Mucosa of descending colon (tissue), 3 donors: ENCODE measurements at regions of chr13 and their contacts with region 1.

Region 1: GRCh38 chr13:29849731-29850223 is 640 bp downstream of the UBL3 start:
- DNase-seq: peak; percentile 65 to 82 (median 78)
- ATAC-seq: peak; percentile 50
- H3K4me3 ChIP-seq: peak overlapping the region; percentile 90
- H3K4me1 ChIP-seq: peaks cover 16% of the 10 kb centered on the region
- CTCF ChIP-seq: no peak

Region 2: DNA sequence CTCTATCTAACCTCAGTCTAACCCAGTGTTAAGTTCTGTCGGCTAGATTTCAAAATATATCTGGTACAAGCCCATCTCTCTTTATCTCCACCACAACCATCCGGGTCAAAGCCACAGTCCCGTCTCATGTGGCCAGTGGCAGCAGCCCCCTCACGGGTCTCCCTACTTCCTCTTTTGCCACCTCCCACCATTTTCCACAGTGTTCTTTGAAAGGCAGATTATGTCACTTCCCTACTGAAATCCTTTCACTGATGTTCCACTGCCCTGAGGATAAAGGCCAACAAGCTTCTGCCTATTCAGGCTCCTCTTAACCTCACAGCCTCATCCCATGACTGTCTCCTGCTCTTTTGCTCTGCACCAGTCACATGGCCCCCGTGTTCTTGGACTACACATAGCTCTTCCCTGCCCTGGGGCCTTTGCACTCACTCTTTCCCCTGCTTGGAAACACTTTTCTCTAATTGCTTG is 116.6 kb before region 1 on chr13:
- intact Hi-C with region 1: no loop called
- DNase-seq: no peak
- ATAC-seq: peak; percentile 11
- H3K4me3 ChIP-seq: no peak overlapping the region
- H3K4me1 ChIP-seq: no peaks in the 10 kb centered on the region
- CTCF ChIP-seq: no peak

Region 3: GRCh38 chr13:29771247-29771646 is 78.5 kb before region 1 on chr13:
- intact Hi-C with region 1: loop called in 1 of 2 experiments (anchors 10 kb)
- DNase-seq: no peak
- ATAC-seq: peak; percentile 84
- H3K4me3 ChIP-seq: no peak overlapping the region
- H3K4me1 ChIP-seq: no peaks in the 10 kb centered on the region
- CTCF ChIP-seq: no peak

Region 4: GRCh38 chr13:29923554-29924481 is 74.0 kb after region 1 on chr13:
- intact Hi-C with region 1: loop called in 1 of 2 experiments (anchors 5 kb)
- DNase-seq: peak; percentile 89 to 90 (median 89)
- ATAC-seq: peak; percentile 91
- H3K4me3 ChIP-seq: no peak overlapping the region
- H3K4me1 ChIP-seq: peaks cover 30% of the 10 kb centered on the region
- CTCF ChIP-seq: peak; percentile 83

Region 5: DNA sequence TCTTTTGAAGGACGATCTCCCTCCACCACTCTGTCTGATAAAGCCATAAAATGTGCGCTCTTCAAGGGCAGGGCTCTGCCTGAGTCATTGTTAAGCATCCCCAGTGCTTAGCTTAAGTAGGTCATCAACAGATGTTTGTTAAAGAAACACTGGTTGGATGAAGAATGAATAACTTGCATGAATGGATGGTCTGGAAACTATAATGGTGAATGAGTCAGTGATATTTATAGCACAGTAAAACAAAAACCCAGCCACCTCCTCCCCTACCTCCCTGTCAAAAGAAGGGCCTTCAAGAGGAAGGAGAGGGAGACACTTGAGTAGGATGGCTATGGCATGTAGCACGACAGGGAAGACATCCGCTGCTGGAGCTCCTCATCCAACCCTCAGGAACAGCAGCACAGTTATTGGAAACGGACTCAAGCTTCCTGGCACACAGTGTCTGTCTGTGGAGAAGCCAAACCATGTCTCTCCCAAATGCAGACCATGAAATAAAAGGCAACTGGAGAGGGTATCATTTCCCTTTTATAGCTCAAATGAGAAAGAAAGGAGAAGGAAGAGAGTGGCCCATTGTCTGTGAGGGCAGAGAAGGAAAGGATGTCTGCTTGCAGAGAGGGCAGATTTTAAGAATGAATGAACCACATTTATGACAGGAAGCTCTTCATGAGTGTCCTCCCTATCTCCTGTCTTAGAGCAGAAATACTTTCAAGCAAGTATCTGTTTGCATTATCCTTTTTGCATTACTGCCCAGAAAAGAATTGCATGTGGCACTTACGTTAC is 184.1 kb after region 1 on chr13:
- intact Hi-C with region 1: no loop called
- DNase-seq: no peak
- ATAC-seq: peak; percentile 30
- H3K4me3 ChIP-seq: no peak overlapping the region
- H3K4me1 ChIP-seq: no peaks in the 10 kb centered on the region
- CTCF ChIP-seq: no peak

Region 6: GRCh38 chr13:30158774-30159445 is 309.1 kb after region 1 on chr13:
- intact Hi-C with region 1: no loop called
- DNase-seq: no peak
- ATAC-seq: peak; percentile 51
- H3K4me3 ChIP-seq: no peak overlapping the region
- H3K4me1 ChIP-seq: no peaks in the 10 kb centered on the region
- CTCF ChIP-seq: no peak